ENCODE measurements at regions of chr10 and their contacts with region 1.

Region 1: DNA sequence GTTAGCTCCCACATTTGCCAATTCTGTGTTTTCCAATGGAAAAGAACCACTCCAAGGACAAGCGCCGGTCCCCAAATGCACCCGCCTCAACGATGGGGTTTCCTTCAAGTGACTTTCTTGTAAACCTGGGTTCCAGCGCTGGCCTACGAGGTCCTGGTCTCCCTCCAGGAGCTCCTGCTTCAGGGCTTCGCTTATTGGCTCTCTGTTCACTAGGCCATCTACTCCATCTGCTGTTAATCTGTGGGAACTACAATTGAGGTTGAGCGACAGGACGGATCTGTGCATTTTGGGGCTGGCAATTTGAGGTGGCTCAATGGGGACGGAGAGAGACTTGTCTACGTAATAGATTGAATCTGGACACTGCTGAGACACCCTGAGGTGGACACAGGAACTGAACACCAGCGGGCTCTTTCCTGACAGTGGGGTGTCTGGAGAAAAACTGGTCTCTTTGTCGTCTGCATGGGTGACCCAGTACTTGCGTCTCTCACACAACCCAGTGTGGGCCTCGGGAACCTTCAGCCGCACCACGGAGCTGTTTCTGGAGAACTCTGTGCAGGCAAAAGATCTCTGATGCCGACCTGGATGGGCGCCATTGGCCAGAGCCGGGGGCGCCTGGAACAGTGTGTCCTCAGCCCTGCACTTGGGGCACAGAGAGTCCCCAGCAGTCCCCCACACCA is 115.9 kb upstream of the ADAM12 start:
- DNase-seq: peak; percentile 77
- H3K4me3 ChIP-seq: no peak overlapping the region
- H3K27ac ChIP-seq: no peak overlapping the region
- H3K4me1 ChIP-seq: no peaks in the 10 kb centered on the region
- H3K27me3 ChIP-seq: no peaks in the 10 kb centered on the region
- CTCF ChIP-seq: peak; percentile 75

Region 2: DNA sequence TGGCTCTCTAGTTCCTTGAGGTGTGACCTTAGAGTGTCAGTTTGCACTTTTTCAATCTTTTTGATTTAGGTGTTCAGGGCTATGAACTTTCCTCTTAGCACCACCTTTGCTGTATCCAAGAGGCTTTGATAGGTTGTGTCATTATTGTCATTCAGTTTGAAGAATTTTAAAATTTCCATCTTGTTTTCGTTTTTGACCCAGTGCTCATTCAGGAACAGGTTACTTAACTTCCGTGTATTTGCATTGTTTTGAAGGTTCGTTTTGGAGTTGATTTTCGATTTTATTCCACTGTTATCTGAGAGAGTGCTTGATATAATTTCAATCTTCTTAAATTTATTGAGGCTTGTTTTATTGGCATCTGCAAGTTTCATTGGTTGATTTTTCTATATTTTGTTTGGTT is 570.5 kb before region 1 on chr10:
- CTCF ChIA-PET with region 1: interaction called, 23 read pairs
- POLR2A ChIA-PET with region 1: no interaction called
- intact Hi-C with region 1: loop called (anchors 2 kb)
- DNase-seq: no peak
- H3K4me3 ChIP-seq: no peak overlapping the region
- H3K27ac ChIP-seq: no peak overlapping the region
- H3K4me1 ChIP-seq: no peaks in the 10 kb centered on the region
- H3K27me3 ChIP-seq: peaks cover 4% of the 10 kb centered on the region
- CTCF ChIP-seq: no peak

Region 3: DNA sequence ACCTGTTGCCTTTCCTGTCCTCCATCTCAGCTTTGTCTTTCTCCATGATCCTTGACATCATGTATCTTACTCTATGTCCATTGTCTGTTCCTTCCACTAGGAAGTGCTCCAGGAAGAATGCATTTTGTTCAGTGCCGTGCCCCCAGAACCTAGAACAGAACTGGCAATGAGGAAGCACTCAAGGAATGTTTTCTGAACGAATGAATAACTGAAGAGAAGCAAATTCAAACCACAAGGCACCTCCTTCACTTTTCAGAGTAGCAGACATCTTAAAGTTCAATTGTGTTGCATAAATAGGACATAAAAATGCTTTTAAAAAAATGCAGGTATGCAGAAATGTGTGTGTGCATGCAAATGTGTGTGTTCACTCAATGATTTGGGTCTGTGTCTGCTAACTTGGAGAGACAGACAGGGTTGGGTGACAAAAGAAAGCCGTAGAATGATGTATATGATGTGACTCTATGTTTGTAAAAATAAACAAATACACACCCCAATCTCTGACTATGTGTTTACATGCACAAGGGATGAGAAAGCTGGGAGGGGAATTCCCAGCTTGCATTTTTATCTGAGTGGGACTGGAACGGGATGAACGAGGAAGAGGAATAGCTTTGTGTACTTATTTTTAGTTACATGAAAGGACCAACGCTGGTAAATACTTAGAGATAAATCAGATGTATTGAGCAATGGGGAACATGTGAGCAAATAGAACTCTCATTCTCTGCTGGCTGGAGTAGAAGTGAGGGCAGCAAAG is 370.1 kb before region 1 on chr10:
- CTCF ChIA-PET with region 1: no interaction called
- POLR2A ChIA-PET with region 1: no interaction called
- intact Hi-C with region 1: loop called (anchors 10 kb)
- DNase-seq: no peak
- H3K4me3 ChIP-seq: no peak overlapping the region
- H3K27ac ChIP-seq: no peak overlapping the region
- H3K4me1 ChIP-seq: peaks cover 21% of the 10 kb centered on the region
- H3K27me3 ChIP-seq: no peaks in the 10 kb centered on the region
- CTCF ChIP-seq: no peak

Region 4: GRCh38 chr10:126387023-126387921 is 116.9 kb before region 1 on chr10:
- CTCF ChIA-PET with region 1: no interaction called
- POLR2A ChIA-PET with region 1: no interaction called
- intact Hi-C with region 1: no loop called
- DNase-seq: peak; percentile 63
- H3K4me3 ChIP-seq: peak overlapping the region; percentile 29
- H3K27ac ChIP-seq: no peak overlapping the region
- H3K4me1 ChIP-seq: no peaks in the 10 kb centered on the region
- H3K27me3 ChIP-seq: peaks cover 42% of the 10 kb centered on the region
- CTCF ChIP-seq: peak; percentile 85

Region 5: DNA sequence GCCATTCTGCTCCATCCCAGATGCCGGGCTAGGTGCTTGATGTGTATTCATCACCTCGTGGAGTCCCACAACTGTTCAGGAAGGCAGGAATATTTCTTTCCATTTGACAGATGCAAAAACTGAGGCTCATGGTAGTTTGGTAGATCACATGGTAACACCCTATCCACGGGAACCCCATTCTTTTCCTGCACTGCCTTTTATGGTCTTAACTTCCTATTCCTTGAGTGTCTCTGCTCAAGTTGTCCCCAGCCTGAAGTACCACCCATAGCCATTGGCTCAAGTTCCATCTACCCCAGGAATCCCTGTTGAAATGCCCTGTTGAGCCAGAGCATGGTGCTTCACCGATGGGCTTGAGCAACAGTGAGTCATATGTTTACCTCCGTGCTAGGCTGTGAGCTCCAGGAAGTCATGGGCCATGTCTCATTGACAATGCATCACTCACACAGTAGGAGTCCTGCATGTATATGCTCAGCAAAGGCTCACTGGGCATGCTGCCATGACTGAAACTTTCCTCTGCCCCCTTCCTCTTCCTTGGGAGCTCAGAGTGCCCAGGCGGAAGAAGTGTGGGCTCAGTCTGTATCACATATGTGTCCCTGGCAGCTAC is 44.2 kb before region 1 on chr10:
- CTCF ChIA-PET with region 1: no interaction called
- POLR2A ChIA-PET with region 1: no interaction called
- intact Hi-C with region 1: no loop called
- DNase-seq: peak; percentile 78
- H3K4me3 ChIP-seq: no peak overlapping the region
- H3K27ac ChIP-seq: no peak overlapping the region
- H3K4me1 ChIP-seq: no peaks in the 10 kb centered on the region
- H3K27me3 ChIP-seq: peaks cover 4% of the 10 kb centered on the region
- CTCF ChIP-seq: no peak

Region 6: DNA sequence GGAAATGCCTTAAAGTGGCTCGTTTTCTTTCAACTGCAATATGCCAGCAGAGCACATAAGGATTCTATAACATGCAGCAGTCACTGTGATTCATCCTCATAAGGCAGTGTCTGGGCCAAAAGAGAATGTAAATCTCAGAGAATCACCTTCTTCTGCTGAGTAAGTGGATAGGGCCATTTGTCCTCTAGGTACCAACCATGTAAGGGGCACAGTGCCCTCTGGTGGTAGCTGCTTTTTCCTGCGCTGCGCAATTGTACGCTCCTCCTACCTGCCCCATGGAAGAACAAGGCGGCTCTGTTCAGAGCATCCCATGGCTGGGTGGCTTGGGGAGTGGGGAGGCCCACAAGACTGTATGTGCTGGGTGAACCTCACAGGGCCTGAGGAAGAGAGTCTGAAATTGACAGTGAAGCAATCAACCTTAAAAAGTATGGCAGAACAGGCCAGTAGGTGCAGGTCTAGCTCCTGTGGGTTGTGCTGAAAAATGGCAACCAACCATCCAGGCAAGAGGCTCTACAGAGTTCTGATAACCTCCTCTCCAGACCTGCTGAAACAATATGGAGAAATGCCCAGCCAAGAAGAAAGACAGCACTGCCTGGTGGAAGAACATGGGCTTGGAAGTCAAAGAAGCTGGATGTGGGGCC is 244.9 kb after region 1 on chr10:
- CTCF ChIA-PET with region 1: no interaction called
- POLR2A ChIA-PET with region 1: no interaction called
- intact Hi-C with region 1: loop called (anchors 10 kb)
- DNase-seq: peak; percentile 79
- H3K4me3 ChIP-seq: no peak overlapping the region
- H3K27ac ChIP-seq: no peak overlapping the region
- H3K4me1 ChIP-seq: no peaks in the 10 kb centered on the region
- H3K27me3 ChIP-seq: peaks cover 13% of the 10 kb centered on the region
- CTCF ChIP-seq: peak; percentile 84